MCF 10A (cell line): ENCODE measurements at regions of chr1 and their contacts with region 1.

Region 1: GRCh38 chr1:201999625-202000238 is 10.7 kb upstream of the ELF3 start:
- DNase-seq: peak; percentile 81
- H3K4me3 Mint-ChIP-seq: no peak overlapping the region
- H3K27ac Mint-ChIP-seq: no peak overlapping the region
- H3K4me1 Mint-ChIP-seq: no peaks in the 10 kb centered on the region
- H3K27me3 Mint-ChIP-seq: no peaks in the 10 kb centered on the region
- CTCF ChIP-seq: peak; percentile 78

Region 2: GRCh38 chr1:201517948-201518470 is 481.7 kb before region 1 on chr1:
- CTCF ChIA-PET with region 1: no interaction called
- POLR2A ChIA-PET with region 1: no interaction called
- intact Hi-C with region 1: no loop called
- DNase-seq: no peak
- H3K4me3 Mint-ChIP-seq: no peak overlapping the region
- H3K27ac Mint-ChIP-seq: peak overlapping the region; percentile 2
- H3K4me1 Mint-ChIP-seq: peaks cover 7% of the 10 kb centered on the region
- H3K27me3 Mint-ChIP-seq: no peaks in the 10 kb centered on the region
- CTCF ChIP-seq: no peak

Region 3: DNA sequence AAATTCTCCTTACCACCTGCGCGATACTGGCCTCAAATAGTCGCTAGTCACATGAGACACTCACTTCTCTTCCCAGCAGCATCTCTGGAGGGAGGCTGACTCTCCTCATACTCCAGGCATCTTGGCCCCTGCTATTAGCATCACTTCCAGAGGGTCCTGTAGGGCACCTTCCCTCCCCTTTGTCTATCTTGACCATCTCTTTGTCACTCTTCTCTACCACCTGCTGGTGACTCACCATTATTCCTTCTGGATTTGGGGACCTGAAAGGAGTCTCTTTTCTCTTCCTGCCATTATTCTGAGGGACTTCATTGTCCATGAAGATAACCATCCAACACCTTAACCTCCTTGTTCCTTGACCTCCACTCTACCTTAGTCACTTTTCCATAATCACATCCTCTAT is 91.3 kb after region 1 on chr1:
- CTCF ChIA-PET with region 1: interaction called, 11 read pairs
- POLR2A ChIA-PET with region 1: no interaction called
- intact Hi-C with region 1: no loop called
- DNase-seq: peak; percentile 42
- H3K4me3 Mint-ChIP-seq: no peak overlapping the region
- H3K27ac Mint-ChIP-seq: no peak overlapping the region
- H3K4me1 Mint-ChIP-seq: peaks cover 14% of the 10 kb centered on the region
- H3K27me3 Mint-ChIP-seq: peaks cover 30% of the 10 kb centered on the region
- CTCF ChIP-seq: no peak

Region 4: DNA sequence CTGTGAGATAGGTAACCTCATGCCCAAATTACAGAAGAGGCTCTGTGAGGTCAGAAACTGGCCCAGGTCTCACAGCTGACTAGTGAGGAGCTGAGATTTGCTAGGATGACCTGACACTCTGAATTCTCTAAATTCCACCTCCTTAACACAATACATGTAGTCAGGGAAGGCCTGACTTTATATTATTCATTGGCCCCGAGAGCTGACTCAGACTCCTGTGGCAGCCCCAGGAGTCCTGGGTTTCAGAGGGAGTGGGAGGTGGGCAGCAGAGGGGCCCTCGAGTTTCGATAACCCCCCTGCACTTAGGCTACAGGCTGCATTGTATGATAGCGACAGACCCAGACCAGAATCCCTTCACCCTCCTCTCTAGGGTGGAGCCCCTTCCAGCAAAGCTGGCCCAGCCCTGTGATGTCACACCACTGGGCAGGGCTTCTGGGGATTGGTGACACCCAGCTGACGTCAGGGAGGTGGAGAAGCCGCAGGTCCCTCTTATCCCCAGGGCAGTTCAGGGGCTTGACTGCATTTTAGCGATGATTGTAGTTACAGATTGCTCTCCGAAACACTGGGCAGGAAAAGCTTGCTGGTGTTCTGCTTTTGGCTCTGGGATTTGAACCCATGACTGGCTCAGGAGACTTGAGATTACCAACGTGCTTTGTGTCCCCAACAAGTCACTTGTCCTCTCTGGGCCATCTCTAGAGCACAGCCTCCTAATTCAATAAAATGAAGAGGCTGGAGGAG is 106.0 kb after region 1 on chr1:
- CTCF ChIA-PET with region 1: interaction called, 1,380 read pairs
- POLR2A ChIA-PET with region 1: interaction called, 5 read pairs
- intact Hi-C with region 1: no loop called
- DNase-seq: peak; percentile 76
- H3K4me3 Mint-ChIP-seq: no peak overlapping the region
- H3K27ac Mint-ChIP-seq: peak overlapping the region; percentile 2
- H3K4me1 Mint-ChIP-seq: peaks cover 40% of the 10 kb centered on the region
- H3K27me3 Mint-ChIP-seq: no peaks in the 10 kb centered on the region
- CTCF ChIP-seq: no peak

Region 5: GRCh38 chr1:202112839-202113672 is 113.3 kb after region 1 on chr1:
- CTCF ChIA-PET with region 1: interaction called, 1,380 read pairs
- POLR2A ChIA-PET with region 1: interaction called, 11 read pairs
- intact Hi-C with region 1: no loop called
- DNase-seq: peak; percentile 27
- H3K4me3 Mint-ChIP-seq: no peak overlapping the region
- H3K27ac Mint-ChIP-seq: no peak overlapping the region
- H3K4me1 Mint-ChIP-seq: peaks cover 31% of the 10 kb centered on the region
- H3K27me3 Mint-ChIP-seq: no peaks in the 10 kb centered on the region
- CTCF ChIP-seq: no peak

Region 6: GRCh38 chr1:202122639-202123335 is 123.1 kb after region 1 on chr1 and contains the start of gene GPR37L1:
- CTCF ChIA-PET with region 1: interaction called, 1,380 read pairs
- POLR2A ChIA-PET with region 1: interaction called, 11 read pairs
- intact Hi-C with region 1: loop called (anchors 1 kb)
- DNase-seq: peak; percentile 30
- H3K4me3 Mint-ChIP-seq: no peak within 1 kb of the TSS
- H3K27ac Mint-ChIP-seq: no peak within 1 kb of the TSS
- H3K4me1 Mint-ChIP-seq: no peaks in the 10 kb centered on the region
- H3K27me3 Mint-ChIP-seq: peaks cover 17% of the 10 kb centered on the region
- CTCF ChIP-seq: peak; percentile 30
- total RNA-seq, gene GPR37L1: not detected in 2 replicates

Region 7: DNA sequence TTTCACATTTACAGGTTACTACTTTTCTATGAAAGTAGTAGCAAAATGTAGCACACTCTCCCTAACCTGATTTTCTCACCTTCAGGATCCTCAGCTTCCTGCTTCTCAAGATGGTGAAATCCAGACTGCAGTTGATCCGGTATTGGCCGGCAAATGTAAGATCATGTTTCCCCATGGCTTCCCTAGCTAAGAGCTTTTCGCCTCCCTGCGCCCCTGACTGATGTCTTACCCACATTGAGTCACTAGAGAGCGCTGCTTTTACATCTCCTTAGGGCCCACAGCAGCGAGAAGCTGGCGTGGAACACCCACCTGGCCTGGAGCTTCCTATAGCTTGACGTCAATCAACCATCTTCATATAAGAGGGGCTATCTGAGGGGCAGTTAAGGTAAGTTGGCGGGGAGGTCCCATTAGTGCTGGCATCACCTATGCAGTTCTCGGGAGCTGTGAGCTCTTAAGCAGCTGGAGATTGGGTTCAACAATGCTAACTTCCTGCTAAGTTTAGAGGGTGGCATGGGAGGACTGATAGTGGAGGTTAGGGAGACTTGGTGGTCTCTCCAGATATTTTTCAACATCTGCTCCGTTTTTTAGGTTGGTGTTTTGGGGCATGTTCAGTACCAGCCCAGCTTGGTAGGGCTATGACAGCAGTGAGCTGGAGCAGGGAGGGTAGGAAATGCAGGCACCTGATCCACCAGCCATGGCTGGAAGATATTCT is 155.2 kb after region 1 on chr1:
- CTCF ChIA-PET with region 1: interaction called, 10 read pairs
- POLR2A ChIA-PET with region 1: no interaction called
- intact Hi-C with region 1: no loop called
- DNase-seq: peak; percentile 92
- H3K4me3 Mint-ChIP-seq: no peak overlapping the region
- H3K27ac Mint-ChIP-seq: no peak overlapping the region
- H3K4me1 Mint-ChIP-seq: peaks cover 12% of the 10 kb centered on the region
- H3K27me3 Mint-ChIP-seq: no peaks in the 10 kb centered on the region
- CTCF ChIP-seq: peak; percentile 58

Region 8: GRCh38 chr1:202888531-202889360 is 889.0 kb after region 1 on chr1 and contains the start of gene RABIF:
- CTCF ChIA-PET with region 1: no interaction called
- POLR2A ChIA-PET with region 1: no interaction called
- intact Hi-C with region 1: no loop called
- DNase-seq: peak; percentile 99
- H3K4me3 Mint-ChIP-seq: peak within 1 kb of the TSS; percentile 97
- H3K27ac Mint-ChIP-seq: peak within 1 kb of the TSS; percentile 88
- H3K4me1 Mint-ChIP-seq: peaks cover 7% of the 10 kb centered on the region
- H3K27me3 Mint-ChIP-seq: no peaks in the 10 kb centered on the region
- CTCF ChIP-seq: no peak
- total RNA-seq, gene RABIF: 11.2 and 13.5 TPM in 2 replicates